Thyroid gland (tissue), 4 donors: ENCODE measurements at regions of chr7 and their contacts with region 1.

Region 1: DNA sequence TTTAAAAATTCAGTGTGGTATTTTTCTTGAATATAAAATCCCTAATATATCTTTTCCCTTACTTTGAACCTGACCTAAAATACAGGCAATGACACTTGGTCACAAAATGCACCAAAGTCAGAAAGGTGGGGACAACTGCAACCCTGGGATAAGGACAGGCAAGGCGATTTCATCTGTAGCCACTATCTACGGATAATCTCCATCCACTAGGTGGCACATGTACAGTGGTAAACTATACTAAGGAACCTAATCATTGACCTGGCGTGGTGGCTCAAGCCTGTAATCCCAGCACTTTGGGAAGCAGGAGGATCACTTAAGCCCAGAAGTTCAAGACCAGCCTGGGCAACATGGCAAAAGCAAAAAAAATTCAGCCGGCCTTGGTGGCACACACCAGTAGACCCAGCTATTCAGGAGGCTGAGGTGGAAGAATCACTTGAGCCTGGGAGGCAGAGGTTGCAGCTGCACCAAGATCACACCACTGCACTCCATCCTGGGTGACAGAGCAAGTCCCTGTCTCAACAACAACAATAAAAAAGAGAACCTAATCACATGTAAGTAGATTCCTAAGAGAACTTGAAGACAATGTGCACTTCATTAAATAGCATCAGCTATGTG is 98.9 kb downstream of the KMT2C start:
- DNase-seq: no peak
- H3K4me3 ChIP-seq: no peak overlapping the region
- H3K27ac ChIP-seq: peak overlapping the region in 1 of 3 donors; percentile 44
- H3K4me1 ChIP-seq: peaks cover 30 to 40% of the 10 kb centered on the region in 2 donors
- H3K27me3 ChIP-seq: no peaks in the 10 kb centered on the region
- CTCF ChIP-seq: peak in 4 of 6 experiments; percentile 20 to 50 (median 46)
- POLR2A ChIP-seq: no peak

Region 2: DNA sequence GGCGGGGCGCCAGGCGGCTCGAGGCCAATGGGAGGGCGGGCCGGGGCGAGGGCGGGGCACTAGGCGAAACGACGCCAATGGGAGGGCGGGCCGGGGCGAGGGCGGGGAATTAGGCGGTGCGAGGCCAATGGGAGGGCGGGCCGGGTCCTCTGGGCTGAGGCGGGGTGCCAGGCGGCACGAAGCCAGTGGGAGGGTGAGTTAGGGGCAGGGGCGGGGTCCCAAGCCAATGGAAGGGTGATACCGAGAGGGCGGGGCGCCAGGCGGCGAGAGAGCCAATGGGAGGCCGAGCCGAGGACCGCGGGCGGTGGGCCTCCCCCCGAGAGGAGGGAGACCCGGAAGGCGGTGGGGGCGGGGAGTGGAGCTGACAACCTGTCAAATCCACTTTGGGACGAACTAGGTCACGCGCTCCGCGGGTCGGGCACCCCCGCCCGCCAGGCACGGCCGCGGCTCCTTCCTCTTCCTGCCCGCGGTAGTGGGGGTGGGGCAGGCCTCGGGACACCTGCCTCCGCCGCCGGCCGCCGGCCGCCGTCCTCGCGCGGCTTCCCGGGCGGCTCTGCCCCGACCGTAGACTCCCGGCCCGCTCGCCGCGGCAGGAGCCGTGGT is 126.9 kb after region 1 on chr7:
- intact Hi-C with region 1: loop called (anchors 10 kb)
- DNase-seq: peak; percentile 100
- H3K4me3 ChIP-seq: peak overlapping the region; percentile 94 to 99 (median 96)
- H3K27ac ChIP-seq: peak overlapping the region; percentile 99 to 100 (median 99)
- H3K4me1 ChIP-seq: peaks cover 14 to 28% of the 10 kb centered on the region in 2 donors
- H3K27me3 ChIP-seq: no peaks in the 10 kb centered on the region
- CTCF ChIP-seq: no peak
- POLR2A ChIP-seq: peak; percentile 84 to 93

Region 3: DNA sequence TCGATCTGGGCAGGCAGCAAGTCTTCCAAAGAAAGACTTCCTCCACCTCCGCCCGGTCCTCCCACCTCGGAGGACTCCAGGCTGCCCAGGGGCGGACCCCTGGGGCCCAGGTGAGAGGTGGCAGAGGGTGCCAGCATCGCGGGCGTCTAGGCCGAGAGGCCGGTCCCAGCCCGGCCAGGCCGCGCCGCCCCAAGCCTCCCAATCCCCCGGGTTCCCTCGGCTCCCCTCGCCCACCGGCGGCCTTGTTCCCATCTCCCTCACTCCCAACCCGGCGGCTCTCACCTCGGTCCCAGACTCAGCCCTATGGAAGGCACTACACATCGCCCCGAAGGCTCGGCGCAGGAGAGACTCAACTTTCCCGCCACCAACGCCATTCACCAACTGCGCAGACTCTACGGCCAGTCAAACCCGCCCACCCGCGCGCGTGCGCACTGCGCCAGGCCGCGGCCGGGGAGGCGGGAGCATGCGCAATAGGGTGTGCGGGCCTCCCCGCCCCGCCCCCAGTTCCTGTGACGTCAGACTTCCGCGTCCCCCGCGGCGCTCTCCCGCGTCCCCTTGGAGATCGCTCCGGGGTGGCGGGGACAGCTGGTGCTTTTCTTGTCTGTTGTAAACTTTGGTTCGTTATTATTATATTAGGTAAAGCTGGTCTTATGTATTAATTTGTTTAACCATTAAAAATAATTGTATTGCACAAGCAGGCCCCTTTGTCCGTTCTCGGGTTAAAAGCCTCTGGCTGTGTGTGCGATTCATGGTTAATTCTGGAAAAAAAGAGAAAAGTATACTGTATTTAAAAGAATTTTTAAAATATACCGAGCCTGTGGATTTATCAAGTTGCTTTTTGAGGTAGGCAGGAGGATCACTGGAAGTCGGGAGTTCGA is 339.1 kb after region 1 on chr7 and contains the start of gene XRCC2:
- intact Hi-C with region 1: loop called (anchors 10 kb)
- DNase-seq: peak; percentile 88 to 91
- H3K4me3 ChIP-seq: peak within 1 kb of the TSS in 2 of 3 donors; percentile 62 to 75
- H3K27ac ChIP-seq: peak within 1 kb of the TSS; percentile 78 to 91 (median 80)
- H3K4me1 ChIP-seq: peaks cover 6 to 7% of the 10 kb centered on the region in 2 donors
- H3K27me3 ChIP-seq: no peaks in the 10 kb centered on the region
- CTCF ChIP-seq: no peak
- POLR2A ChIP-seq: peak; percentile 56 to 78
- total RNA-seq, gene XRCC2: 0.15 to 1.6 (median 0.57) TPM